CD4-positive, alpha-beta T cell (primary cell): ENCODE measurements at regions of chr1 and their contacts with region 1.

Region 1: GRCh38 chr1:107776900-107777663 is 187.9 kb downstream of the VAV3 start:
- DNase-seq: no peak
- ATAC-seq: no peak
- H3K4me3 ChIP-seq: no peak overlapping the region
- H3K4me3 Mint-ChIP-seq: no peak overlapping the region
- H3K27ac ChIP-seq: no peak overlapping the region
- H3K27ac Mint-ChIP-seq: no peak overlapping the region
- H3K4me1 ChIP-seq: no peaks in the 10 kb centered on the region
- H3K4me1 Mint-ChIP-seq: no peaks in the 10 kb centered on the region
- H3K27me3 ChIP-seq: no peaks in the 10 kb centered on the region
- H3K27me3 Mint-ChIP-seq: no peaks in the 10 kb centered on the region
- CTCF ChIP-seq: no peak

Region 2: DNA sequence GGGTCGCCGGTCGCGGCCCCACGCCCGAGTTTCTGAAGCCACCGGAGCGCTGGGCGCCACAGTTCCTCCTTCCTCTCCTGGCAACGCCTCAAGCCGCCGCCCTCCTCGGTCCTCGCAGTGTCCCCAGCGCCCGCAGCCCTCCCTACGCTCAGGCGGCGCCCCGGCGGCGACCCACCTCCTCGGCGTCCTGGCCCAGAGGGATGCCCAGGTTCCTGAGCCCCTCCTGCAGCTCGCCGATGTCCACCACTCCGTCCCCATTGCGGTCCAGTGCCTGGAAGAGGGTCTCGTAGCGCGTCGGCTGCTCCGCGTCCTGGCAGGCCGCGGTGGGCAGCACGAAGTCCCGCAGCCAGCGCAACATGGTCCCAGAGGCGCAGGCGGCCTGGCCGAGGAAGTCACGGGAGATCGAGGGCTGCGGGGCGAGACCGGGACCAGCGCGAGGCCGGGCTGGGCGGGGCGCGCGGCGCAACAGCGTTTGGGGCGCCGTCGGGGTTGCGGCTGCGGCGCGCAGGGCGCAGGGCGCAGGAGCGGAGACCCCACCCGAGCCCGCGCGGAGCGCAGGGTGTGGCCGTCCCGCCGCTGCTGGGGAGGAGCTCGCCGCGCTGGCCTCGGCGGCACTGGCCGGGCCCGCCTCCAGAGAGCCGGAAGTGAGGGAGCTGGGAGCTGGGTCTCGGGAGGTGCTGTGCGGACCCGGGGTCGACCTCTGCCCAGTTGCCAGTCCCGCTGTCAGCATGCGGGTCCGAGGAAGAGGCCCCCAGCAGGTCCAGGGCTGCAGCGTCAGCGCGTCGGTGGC is 422.9 kb after region 1 on chr1 and contains the start of gene SLC25A24:
- CTCF ChIA-PET with region 1: no interaction called
- POLR2A ChIA-PET with region 1: interaction called, 5 read pairs
- intact Hi-C with region 1: loop called in 1 of 2 experiments (anchors 5 kb)
- DNase-seq: peak; percentile 51 to 89 (median 69)
- ATAC-seq: peak; percentile 92
- H3K4me3 ChIP-seq: peak within 1 kb of the TSS; percentile 97
- H3K4me3 Mint-ChIP-seq: peak within 1 kb of the TSS; percentile 94
- H3K27ac ChIP-seq: peak within 1 kb of the TSS; percentile 42 to 79
- H3K27ac Mint-ChIP-seq: peak within 1 kb of the TSS; percentile 83
- H3K4me1 ChIP-seq: peaks cover 16% of the 10 kb centered on the region
- H3K4me1 Mint-ChIP-seq: peaks cover 34% of the 10 kb centered on the region
- H3K27me3 ChIP-seq: no peaks in the 10 kb centered on the region
- H3K27me3 Mint-ChIP-seq: no peaks in the 10 kb centered on the region
- CTCF ChIP-seq: no peak
- total RNA-seq, gene SLC25A24: 4.9 to 5.5 TPM